ENCODE measurements at regions of chr1 and their contacts with region 1.

Region 1: GRCh38 chr1:26391450-26391849 is 18.9 kb upstream of the ZNF683 start:
- DNase-seq: peak; percentile 48
- H3K4me3 ChIP-seq: no peak overlapping the region
- H3K27ac ChIP-seq: no peak overlapping the region
- H3K4me1 ChIP-seq: peaks cover 4% of the 10 kb centered on the region
- H3K27me3 ChIP-seq: no peaks in the 10 kb centered on the region
- CTCF ChIP-seq: peak; percentile 91 to 97

Region 2: GRCh38 chr1:26145041-26145959 is 246.2 kb before region 1 on chr1:
- CTCF ChIA-PET with region 1: no interaction called
- dilution Hi-C with region 1: no loop called
- in situ Hi-C with region 1: loop called in 1 of 2 experiments (anchors 25 kb)
- intact Hi-C with region 1: loop called (anchors 1 kb)
- DNase-seq: peak; percentile 62
- H3K4me3 ChIP-seq: no peak overlapping the region
- H3K27ac ChIP-seq: no peak overlapping the region
- H3K4me1 ChIP-seq: no peaks in the 10 kb centered on the region
- H3K27me3 ChIP-seq: no peaks in the 10 kb centered on the region
- CTCF ChIP-seq: peak; percentile 59 to 77

Region 3: DNA sequence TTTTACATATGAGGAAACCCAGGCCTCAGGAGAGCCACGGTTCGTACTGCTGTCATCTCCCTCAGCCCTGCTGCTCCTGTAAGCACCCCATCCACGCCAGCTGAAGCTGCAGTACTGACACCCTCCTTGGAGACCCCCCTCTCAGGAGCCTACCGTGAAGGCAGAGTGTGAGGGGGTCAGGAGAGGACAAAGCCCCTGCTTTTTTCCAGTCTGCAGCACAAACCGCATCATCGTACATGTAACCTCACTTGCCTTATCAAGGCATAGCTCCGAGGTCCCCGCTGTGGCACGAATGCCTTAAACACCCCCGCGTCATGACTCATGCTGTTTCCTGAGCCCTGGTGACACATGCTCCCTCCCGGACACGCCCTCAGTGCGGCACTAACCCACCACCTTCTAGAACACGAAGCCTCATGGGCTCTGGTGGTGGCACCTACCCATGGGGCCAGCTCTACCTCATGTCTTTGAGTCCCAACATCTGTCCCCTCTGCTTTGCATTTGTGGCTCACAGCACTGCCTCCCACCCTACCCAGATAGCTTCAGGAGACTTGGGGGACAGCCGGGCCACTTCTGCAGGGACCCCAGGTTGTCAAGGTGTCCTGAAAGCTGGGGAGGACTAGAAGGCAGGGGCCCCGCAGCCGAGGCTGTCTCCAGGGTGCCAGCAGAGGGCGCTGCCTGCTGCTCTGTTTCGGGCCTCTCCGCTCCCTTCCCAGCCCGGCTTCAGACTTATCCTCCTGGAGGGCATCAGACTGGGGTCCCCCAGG is 106.7 kb before region 1 on chr1:
- CTCF ChIA-PET with region 1: no interaction called
- dilution Hi-C with region 1: no loop called
- in situ Hi-C with region 1: loop called in 1 of 2 experiments (anchors 25 kb)
- intact Hi-C with region 1: loop called (anchors 1 kb)
- DNase-seq: peak; percentile 87
- H3K4me3 ChIP-seq: no peak overlapping the region
- H3K27ac ChIP-seq: peak overlapping the region; percentile 21
- H3K4me1 ChIP-seq: peaks cover 48% of the 10 kb centered on the region
- H3K27me3 ChIP-seq: no peaks in the 10 kb centered on the region
- CTCF ChIP-seq: peak; percentile 45 to 75

Region 4: GRCh38 chr1:26336477-26337205 is 54.8 kb before region 1 on chr1:
- CTCF ChIA-PET with region 1: no interaction called
- dilution Hi-C with region 1: no loop called
- in situ Hi-C with region 1: loop called in 1 of 2 experiments (anchors 10 kb)
- intact Hi-C with region 1: loop called (anchors 1 kb)
- DNase-seq: peak; percentile 90
- H3K4me3 ChIP-seq: peak overlapping the region; percentile 65 to 83 (median 79)
- H3K27ac ChIP-seq: no peak overlapping the region
- H3K4me1 ChIP-seq: peaks cover 12% of the 10 kb centered on the region
- H3K27me3 ChIP-seq: no peaks in the 10 kb centered on the region
- CTCF ChIP-seq: no peak

Region 5: GRCh38 chr1:26438041-26438440 is 46.6 kb after region 1 on chr1:
- CTCF ChIA-PET with region 1: no interaction called
- dilution Hi-C with region 1: loop called (anchors 5 kb)
- in situ Hi-C with region 1: no loop called
- intact Hi-C with region 1: no loop called
- DNase-seq: no peak
- H3K4me3 ChIP-seq: no peak overlapping the region
- H3K27ac ChIP-seq: no peak overlapping the region
- H3K4me1 ChIP-seq: peaks cover 11% of the 10 kb centered on the region
- H3K27me3 ChIP-seq: no peaks in the 10 kb centered on the region
- CTCF ChIP-seq: no peak